WTC11 (cell line): ENCODE measurements at regions of chr3 and their contacts with region 1.

Region 1: DNA sequence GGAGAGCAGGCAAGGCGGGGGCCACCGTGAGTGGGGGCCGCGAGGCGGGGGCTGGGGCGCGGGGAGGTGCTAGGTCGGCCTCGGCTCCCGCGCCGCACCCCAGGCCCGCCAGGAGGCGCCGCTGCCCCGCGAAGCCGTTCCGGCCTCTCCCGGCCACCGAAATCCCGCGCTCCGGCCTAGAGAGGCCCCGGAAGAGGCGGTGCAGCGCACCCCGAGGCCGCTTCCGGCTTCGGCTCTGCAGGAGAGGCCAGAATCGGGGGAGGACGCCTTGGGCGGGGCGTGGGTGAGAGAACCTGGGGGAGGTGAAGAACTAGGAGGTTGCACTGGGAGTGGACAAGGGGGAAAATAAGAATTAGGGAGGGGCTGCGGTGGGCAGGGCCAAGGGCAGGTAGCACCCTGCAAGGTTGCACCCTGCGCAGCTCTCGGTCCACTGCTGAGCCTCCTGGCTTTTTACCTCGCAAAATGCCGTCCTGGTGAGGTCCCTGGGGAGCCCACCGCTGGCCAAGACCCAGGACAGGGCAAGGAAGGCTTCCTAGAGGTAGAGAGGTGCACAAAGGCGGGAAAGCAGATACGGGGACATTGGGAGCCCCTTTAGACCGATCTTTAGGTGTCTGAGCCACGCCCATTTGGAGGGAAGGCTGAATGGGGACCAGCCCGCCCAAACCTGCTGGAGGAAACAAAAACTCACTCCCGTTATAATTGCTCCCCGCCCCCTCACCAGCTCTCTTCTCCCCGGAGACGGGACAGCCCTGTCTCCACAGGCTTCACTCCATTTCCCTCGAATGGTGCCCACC is 8.4 kb upstream of the GNAI2 start:
- DNase-seq: peak; percentile 92
- ATAC-seq: peak; percentile 75
- H3K4me3 Mint-ChIP-seq: peak overlapping the region; percentile 96
- H3K27ac Mint-ChIP-seq: peak overlapping the region; percentile 89
- H3K4me1 Mint-ChIP-seq: peaks cover 24% of the 10 kb centered on the region
- H3K27me3 Mint-ChIP-seq: peaks cover 4% of the 10 kb centered on the region
- CTCF ChIP-seq: peak; percentile 61

Region 2: DNA sequence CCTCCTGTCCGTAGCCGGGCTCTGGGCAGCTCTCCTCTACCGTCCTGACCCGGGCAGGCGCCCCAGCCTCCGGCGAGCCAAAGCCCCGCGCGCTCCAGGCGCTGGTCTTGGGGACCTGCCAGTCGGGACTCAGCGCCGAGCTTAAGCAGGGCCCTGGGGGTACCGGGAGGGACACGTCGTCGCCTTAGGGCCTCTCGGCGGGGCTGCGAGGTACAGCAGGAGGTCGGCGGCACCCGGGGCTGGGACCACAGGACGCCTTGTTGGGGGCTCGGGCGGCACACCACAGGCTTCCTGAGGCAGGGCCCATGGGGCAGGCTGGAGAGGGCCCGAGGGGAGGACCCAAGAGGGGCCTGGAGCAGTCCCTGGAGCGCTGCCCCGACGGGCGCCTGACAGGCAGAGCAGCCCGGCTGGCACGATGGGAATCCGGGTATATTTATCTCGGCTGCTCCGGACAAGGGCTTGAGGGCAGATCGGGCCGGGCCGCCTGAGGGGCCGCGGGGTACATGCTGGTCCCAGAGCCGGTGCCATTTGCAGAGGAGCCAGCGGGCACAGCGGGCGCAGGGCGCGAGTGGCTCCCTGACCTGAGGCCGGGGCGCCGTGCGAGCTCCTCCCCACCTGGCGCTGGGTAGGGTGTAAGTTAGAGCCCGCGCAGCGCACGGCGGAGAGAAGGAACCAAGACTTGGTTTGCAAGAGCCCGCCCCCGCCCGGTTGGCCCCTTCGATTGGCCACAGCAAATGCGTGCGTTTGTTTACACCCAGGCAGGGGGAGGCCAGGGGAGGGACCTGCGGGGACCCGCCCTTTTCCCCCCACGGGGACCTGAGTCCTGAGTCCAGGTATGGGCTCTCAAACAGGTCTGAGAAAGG is 21.9 kb before region 1 on chr3:
- CTCF ChIA-PET with region 1: interaction called, 82 read pairs
- POLR2A ChIA-PET with region 1: no interaction called
- DNase-seq: peak; percentile 87
- ATAC-seq: peak; percentile 70
- H3K4me3 Mint-ChIP-seq: peak overlapping the region; percentile 67
- H3K27ac Mint-ChIP-seq: no peak overlapping the region
- H3K4me1 Mint-ChIP-seq: peaks cover under 1% of the 10 kb centered on the region; the same call in 1 of the 2 replicates
- H3K27me3 Mint-ChIP-seq: peaks cover 38% of the 10 kb centered on the region
- CTCF ChIP-seq: no peak

Region 3: DNA sequence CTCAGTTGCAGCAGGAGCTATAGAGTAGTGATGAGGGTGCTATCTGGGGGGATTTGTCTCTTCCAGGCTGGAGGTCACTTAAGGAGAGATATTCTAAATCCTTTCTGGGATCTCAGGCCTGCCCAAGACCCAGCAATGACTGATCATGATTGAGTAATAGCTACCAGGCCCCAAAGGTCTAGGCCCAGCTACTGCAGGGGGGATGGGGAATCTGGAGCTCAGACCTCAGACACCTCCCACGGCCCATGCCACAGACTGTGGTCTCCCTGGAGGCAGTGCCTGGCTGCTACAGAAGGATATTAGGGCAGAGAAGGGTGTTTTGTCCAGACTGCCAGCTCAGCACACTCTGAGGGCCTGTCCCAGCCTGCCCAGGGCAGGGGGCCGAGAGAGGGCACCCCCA is 15.7 kb before region 1 on chr3:
- CTCF ChIA-PET with region 1: interaction called, 36 read pairs
- POLR2A ChIA-PET with region 1: no interaction called
- DNase-seq: no peak
- ATAC-seq: no peak
- H3K4me3 Mint-ChIP-seq: no peak overlapping the region
- H3K27ac Mint-ChIP-seq: no peak overlapping the region
- H3K4me1 Mint-ChIP-seq: peaks cover 6% of the 10 kb centered on the region; the same call in 1 of the 2 replicates
- H3K27me3 Mint-ChIP-seq: peaks cover 9% of the 10 kb centered on the region
- CTCF ChIP-seq: no peak

Region 4: DNA sequence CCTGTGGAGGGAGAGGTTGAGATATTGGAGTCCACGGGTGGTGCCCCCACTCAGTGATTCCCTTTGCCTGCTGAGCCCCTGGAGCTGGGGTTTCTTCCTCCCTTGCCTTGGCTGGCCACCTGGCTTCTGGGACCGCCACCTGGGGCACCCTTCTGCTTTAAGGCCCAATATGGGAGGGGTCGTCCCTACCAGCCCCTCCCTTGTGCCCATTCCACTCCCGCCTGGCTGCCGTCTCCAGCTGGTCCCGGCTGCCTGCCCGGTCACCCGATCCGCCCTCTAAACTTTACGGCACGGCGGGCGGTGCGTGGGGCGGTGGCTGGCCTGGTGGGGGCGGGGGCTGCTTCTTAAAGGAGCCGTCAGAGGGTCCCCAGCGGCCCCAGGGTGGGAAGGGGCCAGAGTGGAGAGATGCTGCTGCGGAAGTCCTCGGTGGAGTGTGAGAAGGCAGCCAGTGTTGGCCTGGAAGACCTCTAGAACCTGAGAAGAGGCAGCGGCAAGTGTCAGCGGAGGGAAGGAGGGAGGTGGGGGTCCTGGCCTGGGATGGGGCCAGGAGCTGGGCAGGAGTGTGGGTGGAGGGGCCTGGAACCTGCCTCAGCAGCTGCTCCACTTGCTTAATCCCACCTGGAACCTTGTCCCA is 39.8 kb after region 1 on chr3:
- CTCF ChIA-PET with region 1: interaction called, 73 read pairs
- POLR2A ChIA-PET with region 1: interaction called, 13 read pairs
- DNase-seq: peak; percentile 52
- ATAC-seq: no peak
- H3K4me3 Mint-ChIP-seq: peak overlapping the region; percentile 24; the same call in 1 of the 2 replicates
- H3K27ac Mint-ChIP-seq: no peak overlapping the region
- H3K4me1 Mint-ChIP-seq: peaks cover 51% of the 10 kb centered on the region
- H3K27me3 Mint-ChIP-seq: no peaks in the 10 kb centered on the region; the same call in none of the 2 replicates
- CTCF ChIP-seq: no peak